ENCODE measurements at regions of chr1 and their contacts with region 1.

Region 1: GRCh38 chr1:150053926-150054325 is 13.7 kb upstream of the VPS45 start:
- DNase-seq: no peak
- H3K4me3 ChIP-seq: no peak overlapping the region
- H3K27ac ChIP-seq: no peak overlapping the region
- H3K4me1 ChIP-seq: no peaks in the 10 kb centered on the region
- H3K27me3 ChIP-seq: no peaks in the 10 kb centered on the region
- CTCF ChIP-seq: no peak
- EP300 ChIP-seq: no peak
- POLR2A ChIP-seq: no peak

Region 2: DNA sequence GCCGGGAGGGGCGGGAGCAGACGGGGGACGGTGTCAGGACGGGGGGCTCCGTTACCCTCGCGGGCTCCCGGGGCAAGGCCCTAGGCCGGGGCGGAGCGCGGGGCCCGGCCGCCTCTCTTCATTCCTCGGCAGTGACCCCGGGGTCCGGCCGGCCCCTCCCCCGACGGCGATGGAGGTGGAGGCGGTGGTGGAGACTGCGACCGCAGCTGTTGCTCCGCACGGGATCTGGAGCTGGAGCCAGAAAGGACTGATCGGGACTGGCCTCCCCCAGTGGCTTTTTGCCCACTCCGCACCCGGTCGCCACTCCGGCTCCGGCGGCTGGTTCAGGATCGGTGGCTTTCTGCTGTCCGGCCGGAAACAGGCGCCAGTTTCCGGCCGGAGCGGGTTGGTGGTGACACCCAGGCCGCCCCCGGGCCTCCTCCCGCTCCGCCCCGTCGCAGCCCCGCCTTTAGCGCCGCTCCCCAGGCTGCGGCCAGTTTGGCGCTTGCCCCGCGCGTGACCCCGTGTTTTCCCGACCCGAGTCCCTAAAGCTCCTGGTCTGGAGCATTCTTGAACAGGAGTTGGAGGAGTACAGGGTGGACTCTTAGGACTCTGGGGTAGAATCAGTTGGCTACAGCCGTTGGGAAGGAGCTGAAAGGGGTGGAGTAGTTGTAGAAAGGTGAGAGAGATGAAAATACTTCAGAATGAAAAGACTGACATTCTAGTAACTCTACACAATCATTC is 43.4 kb before region 1 on chr1 and contains the start of gene OTUD7B:
- intact Hi-C with region 1: loop called in 2 of 4 experiments (anchors 5 to 10 kb)
- DNase-seq: peak; percentile 86 to 94 (median 90)
- H3K4me3 ChIP-seq: peak within 1 kb of the TSS; percentile 64
- H3K27ac ChIP-seq: peak within 1 kb of the TSS; percentile 80 to 93
- H3K4me1 ChIP-seq: peaks cover 9% of the 10 kb centered on the region
- H3K27me3 ChIP-seq: no peaks in the 10 kb centered on the region
- CTCF ChIP-seq: peak in 1 of 3 donors; percentile 23
- EP300 ChIP-seq: no peak
- POLR2A ChIP-seq: peak; percentile 78
- total RNA-seq, gene OTUD7B: 16.5 to 40.1 (median 34.1) TPM

Region 3: GRCh38 chr1:150017206-150017799 is 36.6 kb before region 1 on chr1:
- intact Hi-C with region 1: loop called in 1 of 4 experiments (anchors 5 kb)
- DNase-seq: no peak
- H3K4me3 ChIP-seq: no peak overlapping the region
- H3K27ac ChIP-seq: no peak overlapping the region
- H3K4me1 ChIP-seq: no peaks in the 10 kb centered on the region
- H3K27me3 ChIP-seq: no peaks in the 10 kb centered on the region
- CTCF ChIP-seq: no peak
- EP300 ChIP-seq: no peak
- POLR2A ChIP-seq: no peak

Region 4: DNA sequence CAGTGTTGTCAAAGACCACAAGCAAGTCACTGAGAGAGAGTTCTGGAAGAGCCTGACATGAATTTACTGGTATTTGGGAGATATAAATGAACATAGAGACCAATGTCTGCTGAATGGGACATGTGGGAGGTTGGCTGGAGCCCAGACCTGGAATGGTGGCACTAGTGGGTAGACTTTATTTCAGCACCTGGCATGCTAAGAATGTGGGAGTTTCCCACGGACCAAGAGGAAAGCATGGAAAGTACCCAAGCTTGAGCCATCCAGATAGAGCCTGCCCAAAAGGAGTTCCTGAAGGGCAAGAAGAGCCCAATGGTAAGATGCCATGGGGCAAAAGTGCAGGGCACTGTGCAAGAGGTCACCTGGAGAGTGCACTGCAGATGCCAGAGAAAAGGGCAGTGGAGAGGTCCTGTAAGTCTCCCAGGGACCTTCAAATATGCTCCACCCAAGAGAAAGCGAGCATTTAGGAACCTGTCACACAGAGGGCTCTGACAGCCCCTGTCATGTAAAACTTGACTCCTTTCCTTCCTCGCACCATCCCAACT is 1220.1 kb after region 1 on chr1:
- intact Hi-C with region 1: no loop called
- DNase-seq: no peak
- H3K4me3 ChIP-seq: no peak overlapping the region
- H3K27ac ChIP-seq: no peak overlapping the region
- H3K4me1 ChIP-seq: no peaks in the 10 kb centered on the region
- H3K27me3 ChIP-seq: no peaks in the 10 kb centered on the region
- CTCF ChIP-seq: no peak
- EP300 ChIP-seq: no peak
- POLR2A ChIP-seq: no peak

Measured in ovary (tissue), 10 donors.